ENCODE measurements at regions of chr15 and their contacts with region 1.

Region 1: DNA sequence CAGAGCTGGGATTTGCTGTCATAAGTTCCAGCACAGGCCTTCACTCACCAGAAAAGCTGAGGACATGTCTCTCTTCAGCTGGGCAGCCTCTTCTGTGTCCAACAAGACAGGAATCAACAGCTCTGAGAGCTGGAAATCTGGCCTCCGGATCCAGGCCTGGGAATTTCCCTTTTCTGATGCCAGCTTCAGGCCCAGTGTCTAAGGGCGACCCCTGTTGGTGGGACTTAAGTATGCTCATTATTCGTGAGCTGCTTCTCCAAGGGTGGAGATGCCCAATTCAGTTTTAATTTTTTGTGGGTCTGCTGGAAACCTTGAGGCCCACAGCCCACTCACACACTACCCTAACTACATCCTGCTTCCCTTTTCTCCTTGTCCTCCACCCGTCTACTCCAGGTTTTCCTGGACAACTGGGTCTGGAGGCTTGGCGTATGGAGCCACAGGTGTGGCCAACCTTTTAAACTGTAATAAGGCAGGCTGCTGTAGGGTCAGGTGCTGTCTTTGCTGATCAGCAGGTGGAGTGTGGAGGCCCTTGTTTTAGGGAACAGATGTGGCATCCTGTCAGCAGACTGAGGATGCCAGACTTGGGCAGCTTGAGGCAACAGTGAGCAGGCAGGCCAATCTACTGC is 2.6 kb upstream of the CEMIP start:
- DNase-seq: peak; percentile 82

Region 2: GRCh38 chr15:80455668-80456442 is 320.7 kb before region 1 on chr15:
- intact Hi-C with region 1: loop called (anchors 5 to 10 kb)
- DNase-seq: no peak

Region 3: GRCh38 chr15:80567721-80568157 is 208.8 kb before region 1 on chr15:
- intact Hi-C with region 1: loop called (anchors 2 to 5 kb)
- DNase-seq: no peak

Region 4: GRCh38 chr15:80619680-80620079 is 156.9 kb before region 1 on chr15:
- intact Hi-C with region 1: loop called in 1 of 2 experiments (anchors 10 kb)
- DNase-seq: no peak

Region 5: GRCh38 chr15:80679167-80680131 is 97.1 kb before region 1 on chr15:
- intact Hi-C with region 1: no loop called
- DNase-seq: no peak

Region 6: DNA sequence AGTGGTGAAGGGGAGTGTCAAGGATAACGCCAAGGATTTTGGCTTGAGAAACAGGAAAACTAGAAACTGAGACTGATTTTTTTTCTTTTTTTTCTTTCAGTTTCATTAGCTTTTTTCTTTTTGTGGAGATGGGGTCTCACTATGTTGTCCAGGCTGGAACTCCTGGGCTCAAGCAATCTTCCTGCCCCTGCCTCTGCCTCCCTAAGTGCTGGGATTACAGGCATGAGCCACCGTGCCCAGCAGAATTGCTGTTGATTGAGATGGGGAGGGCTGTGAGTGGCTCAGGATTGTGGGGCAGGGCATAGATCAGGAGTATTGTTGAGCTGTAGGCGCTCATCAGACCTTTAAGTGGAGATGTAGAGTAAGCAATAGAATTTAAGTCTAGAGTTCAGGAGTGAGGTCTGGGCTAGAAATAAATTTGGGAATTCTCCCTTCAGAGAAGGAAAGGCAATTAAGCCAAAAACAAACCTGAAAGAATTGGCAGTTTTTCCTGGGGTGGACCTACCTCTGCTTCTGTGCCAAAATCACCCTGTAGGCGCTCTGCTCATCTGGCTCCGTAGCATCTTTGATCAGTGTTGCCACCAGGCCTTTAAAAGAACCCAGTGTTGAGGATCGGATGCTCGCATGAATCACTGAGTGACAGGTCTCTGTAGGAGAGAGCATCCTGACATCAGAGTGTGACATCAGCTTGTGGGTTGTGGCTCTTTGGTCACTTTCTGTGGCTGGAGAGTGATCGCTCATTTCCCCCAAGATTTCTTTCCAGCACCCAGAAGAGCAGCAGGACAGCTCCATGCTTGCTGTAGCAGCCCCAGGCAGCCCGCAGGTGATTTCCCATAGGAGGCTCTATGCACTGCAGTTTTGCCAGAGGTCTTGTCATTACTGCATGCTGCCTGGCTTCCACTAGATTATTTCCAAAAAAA is 65.6 kb before region 1 on chr15:
- intact Hi-C with region 1: loop called in 1 of 2 experiments (anchors 10 kb)
- DNase-seq: no peak

Region 7: GRCh38 chr15:80970018-80970658 is 193.6 kb after region 1 on chr15:
- intact Hi-C with region 1: loop called in 1 of 2 experiments (anchors 10 kb)
- DNase-seq: no peak